OCI-LY7 (cell line): ENCODE measurements at regions of chr3 and their contacts with region 1.

Region 1: DNA sequence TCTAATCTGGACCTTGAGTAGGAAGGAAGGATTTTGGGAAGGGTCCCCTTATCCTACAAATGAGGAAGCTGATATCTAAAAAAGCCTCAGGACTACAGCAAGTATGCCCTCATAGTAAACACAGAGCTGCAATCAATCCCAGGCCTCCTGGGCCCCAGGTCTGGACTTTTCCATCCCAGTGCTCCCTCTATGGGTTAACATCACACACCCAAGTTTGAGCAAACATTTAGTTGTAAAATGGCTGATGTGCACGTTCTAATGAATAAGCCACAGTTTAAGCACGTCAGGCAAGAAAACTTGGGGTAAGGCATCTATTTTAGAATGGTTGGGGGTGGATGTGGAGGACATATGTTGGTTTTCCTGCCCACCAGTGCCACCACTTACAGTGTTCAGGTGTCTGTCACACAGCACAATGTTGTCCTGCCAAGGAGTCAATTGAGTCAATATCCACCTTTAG is 44.3 kb upstream of the UBE2E1 start:
- DNase-seq: peak; percentile 79
- H3K4me3 ChIP-seq: peak overlapping the region; percentile 42
- H3K27ac ChIP-seq: peak overlapping the region; percentile 92
- H3K4me1 ChIP-seq: peaks cover 66% of the 10 kb centered on the region
- CTCF ChIP-seq: peak; percentile 75

Region 2: DNA sequence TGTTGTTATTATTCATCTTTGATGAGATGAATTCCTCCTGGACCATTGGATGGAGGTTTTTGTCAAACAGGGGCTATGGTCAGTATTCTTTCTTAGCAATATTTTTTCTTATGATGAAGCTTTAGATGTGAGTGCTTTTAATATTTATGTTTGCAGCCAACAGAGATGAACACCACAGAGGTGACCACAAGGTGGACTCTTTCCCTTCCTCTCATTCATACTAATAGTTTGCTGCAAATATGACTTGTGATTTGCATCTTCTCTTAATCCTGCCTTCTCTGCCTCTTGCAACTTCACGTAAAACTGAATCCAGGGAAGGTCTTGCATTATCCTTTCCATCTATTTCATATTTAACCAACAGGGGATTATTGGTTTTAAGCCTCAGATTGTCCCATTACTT is 1031.5 kb before region 1 on chr3:
- CTCF ChIA-PET with region 1: no interaction called
- POLR2A ChIA-PET with region 1: no interaction called
- intact Hi-C with region 1: loop called (anchors 5 kb)
- DNase-seq: no peak
- H3K4me3 ChIP-seq: no peak overlapping the region
- H3K27ac ChIP-seq: no peak overlapping the region
- H3K4me1 ChIP-seq: no peaks in the 10 kb centered on the region
- CTCF ChIP-seq: peak; percentile 45; the same call in 1 of the 2 replicates

Region 3: DNA sequence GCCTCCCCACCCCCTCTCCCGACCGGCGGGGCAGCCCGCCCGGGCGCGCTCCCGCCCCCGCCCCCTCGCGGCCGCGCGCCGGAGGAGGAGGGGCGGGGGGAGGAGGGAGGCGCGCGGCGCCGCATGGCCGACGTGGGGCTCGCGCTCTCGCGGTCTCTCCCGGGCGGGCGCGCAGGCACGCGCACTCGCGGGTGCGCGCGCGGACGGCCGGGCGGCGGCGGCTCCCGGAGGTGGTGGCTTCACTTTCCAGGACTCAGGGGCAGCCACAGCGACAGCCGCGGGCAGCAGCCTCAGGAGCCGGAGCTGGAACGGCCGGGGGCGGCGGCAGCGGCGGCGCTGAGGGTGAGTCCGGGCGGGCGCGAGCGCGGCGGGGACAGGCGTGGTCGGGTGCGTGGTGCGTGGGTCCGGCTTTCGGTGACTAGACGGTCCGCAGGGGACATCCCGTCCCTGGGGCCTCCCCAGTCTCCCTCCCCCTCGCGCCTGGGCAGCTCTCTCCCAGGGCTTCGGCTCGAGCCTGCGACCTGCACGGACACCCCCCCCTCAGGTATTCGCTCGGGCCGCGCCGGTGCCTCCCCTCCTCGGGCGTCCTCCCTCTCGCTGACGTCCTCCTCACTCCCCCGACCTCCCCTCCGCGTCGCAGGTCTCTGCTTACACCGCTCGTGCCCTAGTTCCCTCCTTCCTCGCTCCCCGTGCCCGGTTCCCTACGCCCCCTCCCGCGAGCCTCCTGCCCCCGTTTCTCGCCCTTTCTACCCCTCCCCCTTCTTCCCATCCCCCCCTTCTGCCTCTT is 558.4 kb before region 1 on chr3 and contains the start of gene UBE2E2:
- CTCF ChIA-PET with region 1: no interaction called
- POLR2A ChIA-PET with region 1: no interaction called
- intact Hi-C with region 1: loop called (anchors 5 kb)
- DNase-seq: peak; percentile 88
- H3K4me3 ChIP-seq: peak within 1 kb of the TSS; percentile 99
- H3K27ac ChIP-seq: peak within 1 kb of the TSS; percentile 33
- H3K4me1 ChIP-seq: peaks cover 29% of the 10 kb centered on the region
- CTCF ChIP-seq: no peak
- total RNA-seq, gene UBE2E2: 41.1 and 63.2 TPM in 2 replicates

Region 4: GRCh38 chr3:23611737-23612295 is 149.7 kb before region 1 on chr3:
- CTCF ChIA-PET with region 1: interaction called, 4 read pairs
- POLR2A ChIA-PET with region 1: interaction called, 3 read pairs
- intact Hi-C with region 1: loop called (anchors 1 kb)
- DNase-seq: peak; percentile 64
- H3K4me3 ChIP-seq: peak overlapping the region; percentile 41
- H3K27ac ChIP-seq: peak overlapping the region; percentile 5
- H3K4me1 ChIP-seq: peaks cover 46% of the 10 kb centered on the region
- CTCF ChIP-seq: no peak

Region 5: GRCh38 chr3:23659274-23659673 is 102.2 kb before region 1 on chr3:
- CTCF ChIA-PET with region 1: interaction called, 3 read pairs
- POLR2A ChIA-PET with region 1: interaction called, 9 read pairs
- intact Hi-C with region 1: loop called (anchors 1 kb)
- DNase-seq: peak; percentile 96
- H3K4me3 ChIP-seq: peak overlapping the region; percentile 53
- H3K27ac ChIP-seq: peak overlapping the region; percentile 97
- H3K4me1 ChIP-seq: peaks cover 93% of the 10 kb centered on the region
- CTCF ChIP-seq: no peak

Region 6: DNA sequence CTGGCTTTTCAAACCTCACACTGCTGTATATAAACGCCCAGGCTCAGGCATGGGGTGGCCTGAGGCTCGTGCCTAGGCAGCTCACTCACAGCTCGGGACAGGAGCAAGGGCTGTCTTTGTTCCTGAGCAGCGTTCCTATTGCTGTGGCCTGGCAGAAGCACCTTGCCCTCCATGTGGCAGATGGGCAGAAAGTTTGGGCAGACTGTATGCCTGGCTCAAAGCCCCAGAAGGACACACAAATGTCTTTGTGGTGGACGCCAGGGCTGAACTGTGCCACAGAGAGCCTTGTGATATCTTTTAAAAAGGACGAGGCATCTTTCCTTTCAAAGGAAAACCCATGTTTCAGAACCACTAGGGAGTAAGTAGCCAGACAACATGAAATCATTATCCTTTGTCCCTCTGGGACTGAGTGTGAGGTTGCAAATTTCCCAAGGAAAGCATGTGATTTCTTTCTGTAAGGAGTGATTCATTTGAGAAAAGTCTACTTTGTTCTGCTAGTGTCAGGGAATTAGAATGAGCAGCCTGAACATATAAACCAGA is 15.0 kb after region 1 on chr3:
- CTCF ChIA-PET with region 1: no interaction called
- POLR2A ChIA-PET with region 1: interaction called, 10 read pairs
- intact Hi-C with region 1: no loop called
- DNase-seq: no peak
- H3K4me3 ChIP-seq: no peak overlapping the region
- H3K27ac ChIP-seq: no peak overlapping the region
- H3K4me1 ChIP-seq: peaks cover 7% of the 10 kb centered on the region
- CTCF ChIP-seq: no peak

Region 7: DNA sequence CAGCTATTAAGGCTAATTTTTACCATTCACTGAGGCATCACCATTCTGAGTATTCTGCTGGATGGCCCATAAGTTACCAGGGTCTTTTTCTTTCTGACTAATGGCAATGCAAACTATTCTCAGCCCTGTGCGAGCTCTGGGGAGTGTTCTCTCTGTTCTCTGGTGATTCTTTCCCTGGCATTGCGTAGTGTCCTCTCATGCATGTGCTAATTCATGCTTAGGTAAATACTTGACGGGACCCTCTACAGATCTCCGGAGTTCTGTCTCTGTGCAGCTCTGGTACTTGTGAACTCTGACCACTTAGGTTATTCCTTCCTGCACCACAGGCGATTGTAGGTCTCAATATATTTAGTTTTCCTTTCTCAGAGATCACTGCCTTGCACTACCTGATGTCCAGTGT is 79.1 kb after region 1 on chr3:
- CTCF ChIA-PET with region 1: no interaction called
- POLR2A ChIA-PET with region 1: no interaction called
- intact Hi-C with region 1: no loop called
- DNase-seq: no peak
- H3K4me3 ChIP-seq: no peak overlapping the region
- H3K27ac ChIP-seq: no peak overlapping the region
- H3K4me1 ChIP-seq: peaks cover 27% of the 10 kb centered on the region
- CTCF ChIP-seq: no peak

Region 8: GRCh38 chr3:23981955-23982354 is 220.5 kb after region 1 on chr3:
- CTCF ChIA-PET with region 1: no interaction called
- POLR2A ChIA-PET with region 1: no interaction called
- intact Hi-C with region 1: no loop called
- DNase-seq: no peak
- H3K4me3 ChIP-seq: no peak overlapping the region
- H3K27ac ChIP-seq: no peak overlapping the region
- H3K4me1 ChIP-seq: no peaks in the 10 kb centered on the region
- CTCF ChIP-seq: no peak